ENCODE measurements at regions of chr2 and their contacts with region 1.

Region 1: GRCh38 chr2:197515739-197516392 is at the start of gene MOB4:
- DNase-seq: peak; percentile 92
- H3K4me3 Mint-ChIP-seq: peak within 1 kb of the TSS; percentile 96
- H3K27ac Mint-ChIP-seq: peak within 1 kb of the TSS; percentile 98
- H3K4me1 Mint-ChIP-seq: peaks cover 15% of the 10 kb centered on the region
- H3K27me3 Mint-ChIP-seq: no peaks in the 10 kb centered on the region
- CTCF ChIP-seq: no peak
- total RNA-seq, gene MOB4: 15.6 and 20.5 TPM in 2 replicates

Region 2: GRCh38 chr2:197216361-197216979 is 299.4 kb before region 1 on chr2:
- CTCF ChIA-PET with region 1: no interaction called
- POLR2A ChIA-PET with region 1: no interaction called
- intact Hi-C with region 1: no loop called
- DNase-seq: no peak
- H3K4me3 Mint-ChIP-seq: no peak overlapping the region
- H3K27ac Mint-ChIP-seq: no peak overlapping the region
- H3K4me1 Mint-ChIP-seq: no peaks in the 10 kb centered on the region
- H3K27me3 Mint-ChIP-seq: no peaks in the 10 kb centered on the region
- CTCF ChIP-seq: no peak

Region 3: GRCh38 chr2:197434541-197435513 is 81.0 kb before region 1 on chr2 and contains the start of gene SF3B1:
- CTCF ChIA-PET with region 1: no interaction called
- POLR2A ChIA-PET with region 1: interaction called, 49 read pairs
- intact Hi-C with region 1: no loop called
- DNase-seq: peak; percentile 98
- H3K4me3 Mint-ChIP-seq: peak within 1 kb of the TSS; percentile 70
- H3K27ac Mint-ChIP-seq: peak within 1 kb of the TSS; percentile 100
- H3K4me1 Mint-ChIP-seq: peaks cover 15% of the 10 kb centered on the region
- H3K27me3 Mint-ChIP-seq: no peaks in the 10 kb centered on the region
- CTCF ChIP-seq: no peak
- total RNA-seq, gene SF3B1: 179 and 182 TPM in 2 replicates

Region 4: GRCh38 chr2:197453161-197453914 is 62.5 kb before region 1 on chr2 and contains the start of gene COQ10B:
- CTCF ChIA-PET with region 1: interaction called, 4 read pairs
- POLR2A ChIA-PET with region 1: interaction called, 29 read pairs
- intact Hi-C with region 1: no loop called
- DNase-seq: peak; percentile 99
- H3K4me3 Mint-ChIP-seq: peak within 1 kb of the TSS; percentile 99
- H3K27ac Mint-ChIP-seq: peak within 1 kb of the TSS; percentile 100
- H3K4me1 Mint-ChIP-seq: peaks cover 16% of the 10 kb centered on the region
- H3K27me3 Mint-ChIP-seq: no peaks in the 10 kb centered on the region
- CTCF ChIP-seq: no peak
- total RNA-seq, gene COQ10B: 21.3 and 22.8 TPM in 2 replicates

Region 5: GRCh38 chr2:197576631-197577030 is 60.8 kb after region 1 on chr2:
- CTCF ChIA-PET with region 1: interaction called, 3 read pairs
- POLR2A ChIA-PET with region 1: interaction called, 28 read pairs
- intact Hi-C with region 1: no loop called
- DNase-seq: peak; percentile 93
- H3K4me3 Mint-ChIP-seq: no peak overlapping the region
- H3K27ac Mint-ChIP-seq: peak overlapping the region; percentile 6
- H3K4me1 Mint-ChIP-seq: peaks cover 12% of the 10 kb centered on the region
- H3K27me3 Mint-ChIP-seq: no peaks in the 10 kb centered on the region
- CTCF ChIP-seq: no peak

Region 6: GRCh38 chr2:197599285-197599965 is 83.6 kb after region 1 on chr2:
- CTCF ChIA-PET with region 1: interaction called, 5 read pairs
- POLR2A ChIA-PET with region 1: interaction called, 32 read pairs
- intact Hi-C with region 1: loop called (anchors 5 kb)
- DNase-seq: peak; percentile 87
- H3K4me3 Mint-ChIP-seq: peak overlapping the region; percentile 58
- H3K27ac Mint-ChIP-seq: peak overlapping the region; percentile 75
- H3K4me1 Mint-ChIP-seq: peaks cover 6% of the 10 kb centered on the region
- H3K27me3 Mint-ChIP-seq: no peaks in the 10 kb centered on the region
- CTCF ChIP-seq: peak; percentile 25

Region 7: GRCh38 chr2:197615016-197615652 is 99.3 kb after region 1 on chr2:
- CTCF ChIA-PET with region 1: no interaction called
- POLR2A ChIA-PET with region 1: interaction called, 24 read pairs
- intact Hi-C with region 1: no loop called
- DNase-seq: peak; percentile 60
- H3K4me3 Mint-ChIP-seq: no peak overlapping the region
- H3K27ac Mint-ChIP-seq: peak overlapping the region; percentile 9
- H3K4me1 Mint-ChIP-seq: peaks cover 22% of the 10 kb centered on the region
- H3K27me3 Mint-ChIP-seq: no peaks in the 10 kb centered on the region
- CTCF ChIP-seq: peak; percentile 7

Measured in MCF 10A (cell line).